ENCODE measurements at regions of chr4 and their contacts with region 1.

Region 1: DNA sequence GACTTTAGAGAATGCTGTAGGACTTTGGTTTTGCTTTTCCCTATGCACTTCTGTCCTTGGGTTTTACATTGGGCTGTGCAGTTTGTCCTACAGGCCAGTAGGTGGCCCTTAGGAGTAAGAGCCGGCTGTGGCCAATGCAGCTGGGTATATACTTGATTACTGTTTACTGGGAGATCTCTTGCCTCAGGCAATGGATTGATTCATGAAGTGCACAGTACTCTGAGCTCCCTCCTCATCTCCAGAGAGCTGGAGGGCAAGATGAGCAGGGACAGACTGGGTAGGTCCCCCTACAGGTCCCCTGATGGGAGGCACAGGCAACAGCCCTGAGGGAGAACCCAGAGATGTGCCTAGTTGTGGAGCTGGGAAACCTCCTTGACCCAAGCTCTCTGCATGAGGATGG is 103.8 kb upstream of the QRFPR start:
- DNase-seq: peak; percentile 18
- ATAC-seq: peak; percentile 66
- H3K4me3 Mint-ChIP-seq: no peak overlapping the region
- H3K27ac Mint-ChIP-seq: no peak overlapping the region
- H3K4me1 Mint-ChIP-seq: no peaks in the 10 kb centered on the region
- H3K27me3 Mint-ChIP-seq: peaks cover 9% of the 10 kb centered on the region

Region 2: GRCh38 chr4:121380776-121381462 is 103.7 kb before region 1 on chr4 and contains the start of gene QRFPR:
- CTCF ChIA-PET with region 1: no interaction called
- POLR2A ChIA-PET with region 1: no interaction called
- intact Hi-C with region 1: loop called in 1 of 2 experiments (anchors 5 kb)
- DNase-seq: peak; percentile 24
- ATAC-seq: peak; percentile 68
- H3K4me3 Mint-ChIP-seq: peak within 1 kb of the TSS; percentile 45
- H3K27ac Mint-ChIP-seq: no peak within 1 kb of the TSS
- H3K4me1 Mint-ChIP-seq: peaks cover 6% of the 10 kb centered on the region
- H3K27me3 Mint-ChIP-seq: peaks cover 61% of the 10 kb centered on the region
- total RNA-seq, gene QRFPR: not detected

Region 3: DNA sequence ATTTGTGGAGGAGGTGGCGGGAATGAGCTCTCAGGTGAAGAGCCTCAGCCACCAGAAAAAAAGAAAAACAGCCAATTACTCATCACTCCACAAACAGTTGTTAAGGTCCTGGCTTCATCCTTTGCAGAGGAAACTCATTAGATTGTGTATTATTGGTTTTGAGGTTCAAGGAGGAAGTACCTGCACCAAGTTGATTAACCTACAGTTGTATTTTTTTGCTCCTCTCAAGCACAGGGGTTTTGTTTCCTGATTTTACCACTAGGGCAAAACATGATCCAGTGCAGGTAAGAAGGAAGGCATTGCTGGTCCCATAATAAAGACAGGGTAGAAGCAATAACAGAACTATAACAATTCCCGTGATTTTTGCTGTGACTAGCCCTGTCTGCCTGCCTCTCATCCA is 19.8 kb before region 1 on chr4:
- CTCF ChIA-PET with region 1: no interaction called
- POLR2A ChIA-PET with region 1: no interaction called
- intact Hi-C with region 1: no loop called
- DNase-seq: no peak
- ATAC-seq: no peak
- H3K4me3 Mint-ChIP-seq: no peak overlapping the region
- H3K27ac Mint-ChIP-seq: no peak overlapping the region
- H3K4me1 Mint-ChIP-seq: no peaks in the 10 kb centered on the region
- H3K27me3 Mint-ChIP-seq: peaks cover 3% of the 10 kb centered on the region

Region 4: DNA sequence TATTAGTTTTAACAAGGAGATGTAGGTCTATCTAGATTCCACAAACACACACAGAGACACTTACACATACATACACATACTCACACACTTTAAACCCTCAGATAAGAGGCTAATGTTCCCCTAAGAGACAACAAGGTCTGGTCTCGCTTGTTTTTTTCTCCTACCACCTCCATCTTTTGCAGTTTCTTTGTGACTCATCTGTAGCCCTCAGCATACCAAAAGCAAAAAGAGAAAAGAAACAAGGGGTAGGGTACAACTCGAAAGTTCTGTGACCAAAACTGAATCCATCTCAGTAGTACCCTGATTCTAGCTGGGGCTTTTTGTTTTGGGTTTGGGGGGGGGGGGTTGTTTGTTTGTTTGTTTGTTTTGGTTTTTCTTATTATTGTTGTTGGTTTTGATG is 304.3 kb after region 1 on chr4:
- CTCF ChIA-PET with region 1: no interaction called
- POLR2A ChIA-PET with region 1: no interaction called
- intact Hi-C with region 1: no loop called
- DNase-seq: no peak
- ATAC-seq: peak; percentile 63
- H3K4me3 Mint-ChIP-seq: no peak overlapping the region
- H3K27ac Mint-ChIP-seq: no peak overlapping the region
- H3K4me1 Mint-ChIP-seq: peaks cover 9% of the 10 kb centered on the region
- H3K27me3 Mint-ChIP-seq: peaks cover 26% of the 10 kb centered on the region